ENCODE measurements at regions of chr3 and their contacts with region 1.

Region 1: DNA sequence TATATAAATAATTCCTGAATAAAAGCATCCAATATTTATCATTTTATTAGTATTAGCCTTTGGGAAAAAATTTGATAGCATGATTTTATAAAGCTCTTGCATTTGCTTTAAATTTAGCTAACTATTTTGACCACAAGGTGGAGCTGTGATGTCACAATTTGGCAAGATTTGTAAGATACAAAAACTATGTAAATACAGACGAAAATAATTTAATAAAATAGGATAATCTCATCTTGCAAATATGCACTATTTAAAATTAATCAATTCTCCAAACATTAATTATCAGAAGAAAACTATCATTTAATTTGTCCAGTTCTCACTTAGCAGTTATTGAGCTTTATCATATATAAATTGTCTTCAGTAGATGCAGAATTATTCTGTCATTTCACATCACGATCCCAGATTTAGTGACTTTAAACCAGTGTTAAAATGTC is 95.4 kb downstream of the PLOD2 start:
- DNase-seq: no peak
- H3K4me3 ChIP-seq: no peak overlapping the region
- H3K27ac ChIP-seq: no peak overlapping the region
- H3K4me1 ChIP-seq: peaks cover 0 to 3% of the 10 kb centered on the region in 2 donors
- H3K27me3 ChIP-seq: no peaks in the 10 kb centered on the region
- CTCF ChIP-seq: peak; percentile 31 to 73 (median 64)
- POLR2A ChIP-seq: no peak

Region 2: GRCh38 chr3:146189519-146190173 is 124.1 kb after region 1 on chr3:
- intact Hi-C with region 1: loop called (anchors 5 kb)
- DNase-seq: peak; percentile 6 to 12
- H3K4me3 ChIP-seq: no peak overlapping the region
- H3K27ac ChIP-seq: no peak overlapping the region
- H3K4me1 ChIP-seq: peaks cover 0 to 2% of the 10 kb centered on the region in 2 donors
- H3K27me3 ChIP-seq: no peaks in the 10 kb centered on the region
- CTCF ChIP-seq: peak; percentile 63 to 76 (median 70)
- POLR2A ChIP-seq: no peak

Region 3: DNA sequence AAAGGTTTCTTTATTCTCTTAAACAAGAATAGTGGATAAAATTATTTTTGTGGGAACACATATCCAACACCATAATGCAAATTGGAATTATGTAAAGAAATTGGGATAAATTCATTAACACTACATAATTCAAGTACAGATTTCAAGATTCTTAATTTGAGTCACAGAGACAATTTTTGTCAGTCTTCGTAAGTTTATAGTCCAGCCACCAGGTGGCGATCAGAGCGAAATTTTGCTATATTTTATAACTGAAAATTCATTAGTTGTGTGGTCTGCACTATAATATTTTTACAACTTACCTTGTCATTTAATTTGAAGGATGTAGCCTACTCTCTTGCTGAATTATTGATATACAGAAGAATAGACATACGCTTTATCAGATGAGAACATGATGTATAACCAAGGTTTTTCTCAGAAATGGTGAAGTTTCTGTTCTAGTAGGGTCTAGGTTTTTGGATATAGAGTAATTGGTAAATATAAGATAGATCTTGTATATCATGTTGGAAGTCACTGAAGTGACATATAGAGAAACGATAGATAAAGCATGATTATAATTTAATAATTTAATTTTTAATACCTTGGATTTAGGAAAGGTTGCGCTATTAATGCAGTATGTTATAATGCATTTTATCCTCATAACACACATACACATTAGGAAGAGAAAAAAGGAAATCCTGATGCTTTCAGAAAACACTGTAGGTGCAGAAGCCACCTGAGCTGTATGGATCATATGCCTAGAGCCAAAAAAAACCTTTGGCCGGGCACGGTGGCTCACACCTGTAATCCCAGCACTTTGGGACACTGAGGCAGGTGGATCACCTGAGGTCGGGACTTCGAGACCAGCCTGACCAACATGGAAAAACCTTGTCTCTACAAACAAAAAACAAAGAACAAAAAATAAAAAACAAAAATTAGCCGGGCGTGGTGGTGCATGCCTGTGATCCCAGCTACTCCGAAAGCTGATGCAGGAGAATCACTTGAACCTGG is 153.6 kb after region 1 on chr3:
- intact Hi-C with region 1: no loop called
- DNase-seq: peak; percentile 27 to 42
- H3K4me3 ChIP-seq: no peak overlapping the region
- H3K27ac ChIP-seq: no peak overlapping the region
- H3K4me1 ChIP-seq: peaks cover 0 to 17% of the 10 kb centered on the region in 2 donors
- H3K27me3 ChIP-seq: no peaks in the 10 kb centered on the region
- CTCF ChIP-seq: peak; percentile 40 to 81 (median 68)
- POLR2A ChIP-seq: no peak

Region 4: GRCh38 chr3:146334151-146334550 is 268.6 kb after region 1 on chr3:
- intact Hi-C with region 1: loop called (anchors 5 kb)
- DNase-seq: no peak
- H3K4me3 ChIP-seq: no peak overlapping the region
- H3K27ac ChIP-seq: no peak overlapping the region
- H3K4me1 ChIP-seq: no peaks in the 10 kb centered on the region
- H3K27me3 ChIP-seq: no peaks in the 10 kb centered on the region
- CTCF ChIP-seq: no peak
- POLR2A ChIP-seq: no peak

Region 5: DNA sequence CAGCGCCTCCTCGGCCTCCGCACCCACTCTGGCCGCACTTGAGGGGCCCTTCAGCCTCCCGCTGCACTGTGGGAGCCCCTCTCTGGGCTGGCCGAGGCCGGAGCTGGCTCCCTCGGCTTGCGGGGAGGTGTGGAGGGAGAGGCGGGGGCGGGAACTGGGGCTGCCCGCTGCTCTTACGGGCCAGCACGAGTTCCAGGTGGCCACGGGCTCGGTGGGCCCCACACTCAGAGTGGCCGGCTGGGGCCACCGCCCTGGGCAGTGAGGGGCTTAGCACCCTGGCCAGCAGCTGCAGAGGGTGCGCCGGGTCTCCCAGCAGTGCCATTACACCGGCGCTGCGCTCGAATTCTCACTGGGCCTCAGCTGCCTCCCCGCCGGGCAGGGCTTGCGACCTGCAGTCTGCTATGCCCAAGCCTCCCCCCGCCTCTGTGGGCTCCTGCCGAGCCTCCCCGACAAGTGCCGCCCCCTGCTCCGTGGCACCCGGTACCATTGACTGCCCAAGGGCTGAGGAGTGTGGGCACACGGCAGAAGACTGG is 706.7 kb after region 1 on chr3:
- intact Hi-C with region 1: no loop called
- DNase-seq: no peak
- H3K4me3 ChIP-seq: no peak overlapping the region
- H3K27ac ChIP-seq: no peak overlapping the region
- H3K4me1 ChIP-seq: no peaks in the 10 kb centered on the region
- H3K27me3 ChIP-seq: no peaks in the 10 kb centered on the region
- CTCF ChIP-seq: no peak
- POLR2A ChIP-seq: no peak

Measured in thyroid gland (tissue), 4 donors.